CD4-positive, alpha-beta T cell (primary cell): ENCODE measurements at regions of chr15 and their contacts with region 1.

Region 1: DNA sequence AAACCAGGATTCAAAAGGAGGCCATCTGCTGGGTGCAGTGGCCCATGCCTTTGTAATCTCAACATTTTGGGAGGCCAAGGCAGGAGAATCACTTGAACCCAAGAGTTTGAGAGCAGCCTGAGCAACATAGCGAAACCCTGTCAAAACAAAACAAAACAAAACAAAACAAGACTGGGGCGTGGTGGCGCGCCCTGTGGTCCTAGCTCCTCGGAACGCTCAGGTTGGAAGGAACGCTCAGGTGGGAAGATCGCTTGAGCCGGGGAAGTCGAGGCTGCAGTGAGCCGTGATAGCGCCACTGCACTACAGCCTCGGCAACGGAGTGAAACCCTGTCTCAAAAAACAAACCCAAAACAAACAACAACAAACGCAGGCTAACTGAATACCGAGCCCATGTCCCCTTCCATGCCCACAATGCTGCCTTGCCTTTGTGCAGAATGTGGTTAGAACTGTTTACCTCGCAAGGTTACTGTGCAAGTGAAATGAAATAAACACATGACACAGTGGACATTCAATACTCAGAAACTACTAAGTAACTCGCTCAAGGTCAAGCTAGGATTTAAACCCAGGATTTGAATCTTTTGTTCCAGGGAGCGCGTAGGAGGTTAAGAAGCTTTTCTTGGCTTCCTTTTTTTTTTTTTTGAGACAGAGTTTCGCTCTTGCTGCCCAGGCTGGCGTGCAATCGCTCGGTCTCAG is 766 bp upstream of the EMC4 start:
- DNase-seq: peak in 2 of 14 experiments; percentile 6 to 21
- ATAC-seq: no peak
- H3K4me3 ChIP-seq: peak overlapping the region; percentile 68
- H3K4me3 Mint-ChIP-seq: peak overlapping the region; percentile 97
- H3K27ac ChIP-seq: peak overlapping the region in 1 of 2 donors; percentile 81
- H3K27ac Mint-ChIP-seq: peak overlapping the region; percentile 99
- H3K4me1 ChIP-seq: peaks cover 20% of the 10 kb centered on the region
- H3K4me1 Mint-ChIP-seq: peaks cover 23% of the 10 kb centered on the region
- H3K27me3 ChIP-seq: no peaks in the 10 kb centered on the region
- H3K27me3 Mint-ChIP-seq: peaks cover 5% of the 10 kb centered on the region
- CTCF ChIP-seq: no peak

Region 2: GRCh38 chr15:34101366-34102175 is 122.5 kb before region 1 on chr15 and contains the starts of genes EMC7 and PGBD4:
- CTCF ChIA-PET with region 1: no interaction called
- POLR2A ChIA-PET with region 1: interaction called, 38 read pairs
- intact Hi-C with region 1: loop called (anchors 1 kb)
- DNase-seq: peak; percentile 97 to 100 (median 99)
- ATAC-seq: peak; percentile 96
- H3K4me3 ChIP-seq: peak within 1 kb of the TSS; percentile 80
- H3K4me3 Mint-ChIP-seq: peak within 1 kb of the TSS; percentile 91
- H3K27ac ChIP-seq: peak within 1 kb of the TSS; percentile 86 to 97
- H3K27ac Mint-ChIP-seq: peak within 1 kb of the TSS; percentile 96
- H3K4me1 ChIP-seq: peaks cover 20% of the 10 kb centered on the region
- H3K4me1 Mint-ChIP-seq: peaks cover 54% of the 10 kb centered on the region
- H3K27me3 ChIP-seq: no peaks in the 10 kb centered on the region
- H3K27me3 Mint-ChIP-seq: no peaks in the 10 kb centered on the region
- CTCF ChIP-seq: no peak
- total RNA-seq, gene EMC7: 54.0 to 54.6 TPM
- total RNA-seq, gene PGBD4: 2.3 to 2.6 TPM

Region 3: DNA sequence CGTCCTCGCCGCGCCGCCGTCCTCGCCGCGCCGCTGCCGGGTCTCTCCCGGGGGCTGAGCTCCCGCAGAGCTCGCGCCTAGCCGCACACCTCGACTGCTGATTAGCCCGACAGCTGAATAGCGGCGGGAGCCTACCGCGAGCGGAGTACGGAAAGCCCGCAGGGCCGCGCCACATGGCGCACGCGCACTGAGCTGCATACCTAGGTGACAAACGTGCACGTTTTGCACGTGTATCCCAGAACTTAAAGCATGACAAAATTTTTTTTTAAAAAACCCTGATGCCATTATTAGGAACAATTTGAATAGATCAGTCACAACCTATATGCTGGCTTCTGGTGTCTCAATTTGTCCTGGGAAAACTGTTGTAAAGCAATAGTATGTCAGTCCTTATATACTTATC is 213.6 kb after region 1 on chr15 and contains the start of gene GOLGA8A:
- CTCF ChIA-PET with region 1: no interaction called
- POLR2A ChIA-PET with region 1: no interaction called
- intact Hi-C with region 1: loop called in 1 of 2 experiments (anchors 10 kb)
- DNase-seq: peak; percentile 72 to 93 (median 84)
- ATAC-seq: peak; percentile 79
- H3K4me3 ChIP-seq: peak within 1 kb of the TSS; percentile 60
- H3K4me3 Mint-ChIP-seq: peak within 1 kb of the TSS; percentile 100
- H3K27ac ChIP-seq: peak within 1 kb of the TSS in 1 of 2 donors; percentile 7
- H3K27ac Mint-ChIP-seq: peak within 1 kb of the TSS; percentile 96
- H3K4me1 ChIP-seq: peaks cover 17% of the 10 kb centered on the region
- H3K4me1 Mint-ChIP-seq: peaks cover 27% of the 10 kb centered on the region
- H3K27me3 ChIP-seq: no peaks in the 10 kb centered on the region
- H3K27me3 Mint-ChIP-seq: peaks cover 5% of the 10 kb centered on the region
- CTCF ChIP-seq: no peak
- total RNA-seq, gene GOLGA8A: 276 to 295 TPM

Region 4: GRCh38 chr15:34810455-34811146 is 586.6 kb after region 1 on chr15:
- CTCF ChIA-PET with region 1: no interaction called
- POLR2A ChIA-PET with region 1: no interaction called
- intact Hi-C with region 1: no loop called
- DNase-seq: no peak
- ATAC-seq: no peak
- H3K4me3 ChIP-seq: no peak overlapping the region
- H3K4me3 Mint-ChIP-seq: no peak overlapping the region
- H3K27ac ChIP-seq: no peak overlapping the region
- H3K27ac Mint-ChIP-seq: no peak overlapping the region
- H3K4me1 ChIP-seq: no peaks in the 10 kb centered on the region
- H3K4me1 Mint-ChIP-seq: no peaks in the 10 kb centered on the region
- H3K27me3 ChIP-seq: peaks cover 0 to 6% of the 10 kb centered on the region in 2 experiments
- H3K27me3 Mint-ChIP-seq: peaks cover 57% of the 10 kb centered on the region
- CTCF ChIP-seq: no peak